B cell (primary cell): ENCODE measurements at regions of chr15 and their contacts with region 1.

Region 1: DNA sequence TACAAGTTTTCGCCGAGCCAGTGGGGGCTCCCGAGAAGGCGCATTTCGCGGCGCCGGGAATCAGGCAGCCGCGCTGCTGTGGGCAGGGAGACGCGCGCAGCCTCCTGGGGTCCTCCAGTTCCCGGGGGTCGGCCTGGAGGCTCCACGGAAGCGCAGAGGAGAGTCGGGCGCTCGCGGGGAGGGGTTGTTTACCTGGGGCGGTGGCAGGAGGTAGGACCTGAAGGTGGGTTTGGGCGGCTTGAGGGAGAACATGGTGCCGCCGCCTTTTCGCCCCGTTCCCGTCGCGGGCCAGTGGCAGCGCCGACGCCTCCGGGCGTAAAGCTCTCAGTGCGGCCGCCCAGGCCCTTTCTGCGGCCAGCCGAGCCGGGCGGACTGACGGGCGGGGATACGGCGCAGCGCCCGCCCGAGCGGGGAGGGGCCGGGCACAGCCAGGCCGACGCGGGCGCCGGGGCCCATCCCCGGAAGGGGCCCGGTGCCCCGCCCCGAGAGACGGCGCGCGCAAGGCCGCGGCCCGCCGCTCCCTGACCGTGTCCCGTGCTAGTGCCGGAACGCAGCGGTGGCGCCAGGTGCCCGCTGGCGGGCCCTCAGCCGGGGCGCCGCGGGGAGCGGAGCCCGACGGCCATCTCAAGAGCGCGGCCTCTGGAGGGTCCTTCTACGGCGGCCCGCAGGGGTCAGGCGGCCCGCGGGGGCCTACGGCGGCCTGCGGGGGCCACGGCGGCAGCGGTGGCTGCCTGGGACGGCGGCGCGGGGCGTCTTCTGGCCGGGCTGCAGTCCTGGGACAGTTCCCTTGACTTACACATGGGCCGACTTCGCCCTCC is at the start of gene MTMR10:
- DNase-seq: peak; percentile 90
- ATAC-seq: peak; percentile 92
- H3K4me3 ChIP-seq: peak within 1 kb of the TSS; percentile 77 to 96 (median 85)
- H3K4me3 Mint-ChIP-seq: peak within 1 kb of the TSS; percentile 95
- H3K27ac ChIP-seq: peak within 1 kb of the TSS; percentile 81 to 94
- H3K27ac Mint-ChIP-seq: peak within 1 kb of the TSS; percentile 97
- H3K4me1 ChIP-seq: peaks cover 21 to 31% of the 10 kb centered on the region in 2 donors
- H3K4me1 Mint-ChIP-seq: peaks cover 31% of the 10 kb centered on the region
- H3K27me3 ChIP-seq: no peaks in the 10 kb centered on the region
- H3K27me3 Mint-ChIP-seq: no peaks in the 10 kb centered on the region
- CTCF ChIP-seq: no peak
- total RNA-seq, gene MTMR10: 50.2 and 53.2 TPM in 2 replicates

Region 2: DNA sequence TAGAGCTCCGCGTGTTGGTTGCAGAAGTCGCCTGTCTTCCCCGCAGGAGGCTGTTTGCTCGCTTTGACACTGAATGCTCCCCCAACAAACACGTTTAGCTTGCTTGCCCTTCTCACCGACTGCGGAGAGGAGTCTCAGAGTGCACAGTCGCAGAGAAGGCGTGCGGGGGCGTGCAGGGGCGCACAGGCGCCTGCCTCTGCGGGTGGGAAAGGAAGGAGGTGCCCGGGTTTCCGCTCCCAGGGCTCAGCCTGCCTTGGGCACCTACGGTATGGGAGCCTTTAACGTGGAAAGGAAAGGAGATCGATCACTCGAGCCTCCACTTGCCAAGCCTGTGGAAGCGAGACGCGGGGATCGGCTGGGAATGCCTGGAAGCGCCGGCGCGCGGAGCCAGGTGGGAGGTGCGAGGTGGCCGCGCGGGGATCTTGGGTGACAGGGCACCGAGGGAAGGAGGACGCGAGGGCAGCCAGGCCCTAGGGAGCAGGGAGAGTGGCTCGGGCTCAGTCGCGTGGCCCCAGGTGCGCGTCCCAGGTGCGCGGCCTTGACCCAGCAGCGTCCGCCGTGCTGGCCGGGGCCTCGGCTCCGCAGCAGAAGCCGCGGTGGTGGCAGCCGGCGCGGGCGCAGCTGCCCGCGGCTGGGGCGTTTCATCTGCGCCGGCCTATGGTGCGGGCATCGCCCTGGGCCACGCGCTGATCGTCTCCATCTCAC is 87.8 kb before region 1 on chr15 and contains the start of gene FAN1:
- CTCF ChIA-PET with region 1: no interaction called
- POLR2A ChIA-PET with region 1: no interaction called
- intact Hi-C with region 1: loop called (anchors 2 kb)
- DNase-seq: peak; percentile 79
- ATAC-seq: peak; percentile 93
- H3K4me3 ChIP-seq: peak within 1 kb of the TSS; percentile 62 to 84 (median 71)
- H3K4me3 Mint-ChIP-seq: peak within 1 kb of the TSS; percentile 93
- H3K27ac ChIP-seq: peak within 1 kb of the TSS in 1 of 2 donors; percentile 56
- H3K27ac Mint-ChIP-seq: peak within 1 kb of the TSS; percentile 83
- H3K4me1 ChIP-seq: peaks cover 0 to 6% of the 10 kb centered on the region in 2 donors
- H3K4me1 Mint-ChIP-seq: peaks cover 29% of the 10 kb centered on the region
- H3K27me3 ChIP-seq: no peaks in the 10 kb centered on the region
- H3K27me3 Mint-ChIP-seq: no peaks in the 10 kb centered on the region
- CTCF ChIP-seq: no peak
- total RNA-seq, gene FAN1: 20.5 and 21.3 TPM in 2 replicates

Region 3: GRCh38 chr15:30973379-30973778 is 18.1 kb before region 1 on chr15:
- CTCF ChIA-PET with region 1: interaction called, 5 read pairs
- POLR2A ChIA-PET with region 1: no interaction called
- intact Hi-C with region 1: loop called (anchors 2 kb)
- DNase-seq: no peak
- ATAC-seq: no peak
- H3K4me3 ChIP-seq: no peak overlapping the region
- H3K4me3 Mint-ChIP-seq: no peak overlapping the region
- H3K27ac ChIP-seq: no peak overlapping the region
- H3K27ac Mint-ChIP-seq: no peak overlapping the region
- H3K4me1 ChIP-seq: peaks cover 17 to 33% of the 10 kb centered on the region in 2 donors
- H3K4me1 Mint-ChIP-seq: peaks cover 64% of the 10 kb centered on the region
- H3K27me3 ChIP-seq: no peaks in the 10 kb centered on the region
- H3K27me3 Mint-ChIP-seq: no peaks in the 10 kb centered on the region
- CTCF ChIP-seq: no peak

Region 4: GRCh38 chr15:31004220-31004733 is 12.8 kb after region 1 on chr15:
- CTCF ChIA-PET with region 1: interaction called, 10 read pairs
- POLR2A ChIA-PET with region 1: interaction called, 15 read pairs
- intact Hi-C with region 1: loop called (anchors 2 kb)
- DNase-seq: peak; percentile 83
- ATAC-seq: peak; percentile 92
- H3K4me3 ChIP-seq: peak overlapping the region in 4 of 5 experiments; percentile 3 to 47 (median 30)
- H3K4me3 Mint-ChIP-seq: peak overlapping the region; percentile 75
- H3K27ac ChIP-seq: peak overlapping the region; percentile 28 to 55
- H3K27ac Mint-ChIP-seq: peak overlapping the region; percentile 90
- H3K4me1 ChIP-seq: peaks cover 46 to 61% of the 10 kb centered on the region in 2 donors
- H3K4me1 Mint-ChIP-seq: peaks cover 84% of the 10 kb centered on the region
- H3K27me3 ChIP-seq: no peaks in the 10 kb centered on the region
- H3K27me3 Mint-ChIP-seq: no peaks in the 10 kb centered on the region
- CTCF ChIP-seq: no peak

Region 5: DNA sequence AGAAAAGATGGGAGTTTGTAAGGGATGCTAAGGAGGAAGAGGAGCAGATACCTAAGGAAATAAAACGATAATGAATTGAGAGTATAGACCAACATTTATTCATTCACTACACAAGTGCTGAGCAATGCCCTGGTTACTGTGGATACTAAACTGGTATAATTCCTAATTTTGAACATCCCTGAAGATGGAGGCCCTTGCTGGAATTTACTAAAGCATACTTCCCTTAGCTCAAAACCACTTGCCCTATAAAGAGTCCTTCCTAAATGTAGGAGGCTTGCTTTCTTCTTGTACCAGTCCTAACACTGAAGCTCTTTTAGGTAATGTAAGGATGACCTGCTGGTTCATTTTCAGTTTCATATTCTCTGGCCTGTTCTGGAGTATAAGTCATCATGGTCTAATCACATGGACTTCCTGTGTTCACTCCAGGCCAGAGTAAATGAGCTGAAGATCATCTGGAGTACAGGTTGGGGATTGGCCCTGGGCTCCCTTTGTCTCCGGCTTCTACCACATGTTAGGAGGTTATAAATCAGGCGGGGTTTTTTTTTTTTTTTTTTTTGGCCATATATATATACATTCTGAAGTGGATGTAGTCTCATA is 40.1 kb after region 1 on chr15:
- CTCF ChIA-PET with region 1: no interaction called
- POLR2A ChIA-PET with region 1: interaction called, 3 read pairs
- intact Hi-C with region 1: loop called (anchors 5 kb)
- DNase-seq: no peak
- ATAC-seq: peak; percentile 45
- H3K4me3 ChIP-seq: no peak overlapping the region
- H3K4me3 Mint-ChIP-seq: no peak overlapping the region
- H3K27ac ChIP-seq: no peak overlapping the region
- H3K27ac Mint-ChIP-seq: no peak overlapping the region
- H3K4me1 ChIP-seq: peaks cover 21% of the 10 kb centered on the region in 2 donors
- H3K4me1 Mint-ChIP-seq: peaks cover 45% of the 10 kb centered on the region
- H3K27me3 ChIP-seq: no peaks in the 10 kb centered on the region
- H3K27me3 Mint-ChIP-seq: no peaks in the 10 kb centered on the region
- CTCF ChIP-seq: no peak

Region 6: DNA sequence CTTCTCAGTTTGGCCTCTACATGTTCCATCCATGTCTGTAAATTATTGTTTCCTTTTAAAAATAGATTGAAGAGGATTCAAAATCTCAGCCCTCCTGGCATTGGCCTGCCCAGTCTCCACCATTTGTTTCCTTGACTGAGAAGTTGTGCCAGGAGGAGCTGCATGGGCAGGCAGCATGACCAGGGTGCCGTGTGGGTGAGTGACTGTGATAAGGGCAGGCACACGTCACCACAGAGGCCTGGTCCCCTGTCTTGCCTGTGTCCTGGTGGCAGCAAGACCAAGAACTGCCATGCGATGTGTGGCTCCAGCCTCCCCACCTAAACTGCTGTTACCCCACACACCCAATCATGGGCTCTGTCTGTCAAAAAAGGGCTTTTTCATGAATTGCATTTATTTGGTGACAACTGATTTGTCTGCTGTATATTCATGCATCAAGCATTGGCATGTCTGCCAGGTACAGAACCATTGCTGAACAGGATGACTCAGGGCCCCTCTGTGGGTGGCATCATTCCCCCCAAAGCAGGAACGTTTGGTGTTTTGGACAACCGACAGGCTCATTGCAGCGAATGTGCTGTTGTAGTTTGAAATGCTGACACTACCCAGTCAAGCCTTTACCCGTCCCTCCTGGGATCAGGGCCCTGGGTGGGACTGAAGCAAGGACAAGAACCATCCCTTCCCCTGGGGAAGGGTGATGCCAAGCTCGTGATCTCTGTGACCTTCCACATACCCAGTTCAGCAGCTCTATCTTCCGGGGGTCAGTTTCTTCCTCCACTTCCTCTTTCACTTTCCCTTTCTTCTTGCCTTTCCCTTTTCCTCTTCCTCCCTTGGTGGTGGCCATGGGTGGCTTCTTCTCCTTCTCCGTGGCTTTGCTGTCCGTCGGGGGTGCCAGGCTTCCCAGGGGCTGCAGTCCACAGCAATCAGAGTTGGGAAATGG is 58.5 kb after region 1 on chr15:
- CTCF ChIA-PET with region 1: no interaction called
- POLR2A ChIA-PET with region 1: no interaction called
- intact Hi-C with region 1: loop called (anchors 2 kb)
- DNase-seq: peak; percentile 56
- ATAC-seq: peak; percentile 59
- H3K4me3 ChIP-seq: peak overlapping the region in 1 of 5 experiments; percentile 32
- H3K4me3 Mint-ChIP-seq: peak overlapping the region; percentile 69
- H3K27ac ChIP-seq: peak overlapping the region; percentile 74 to 87
- H3K27ac Mint-ChIP-seq: peak overlapping the region; percentile 95
- H3K4me1 ChIP-seq: peaks cover 49 to 55% of the 10 kb centered on the region in 2 donors
- H3K4me1 Mint-ChIP-seq: peaks cover 62% of the 10 kb centered on the region
- H3K27me3 ChIP-seq: no peaks in the 10 kb centered on the region
- H3K27me3 Mint-ChIP-seq: no peaks in the 10 kb centered on the region
- CTCF ChIP-seq: no peak

Region 7: DNA sequence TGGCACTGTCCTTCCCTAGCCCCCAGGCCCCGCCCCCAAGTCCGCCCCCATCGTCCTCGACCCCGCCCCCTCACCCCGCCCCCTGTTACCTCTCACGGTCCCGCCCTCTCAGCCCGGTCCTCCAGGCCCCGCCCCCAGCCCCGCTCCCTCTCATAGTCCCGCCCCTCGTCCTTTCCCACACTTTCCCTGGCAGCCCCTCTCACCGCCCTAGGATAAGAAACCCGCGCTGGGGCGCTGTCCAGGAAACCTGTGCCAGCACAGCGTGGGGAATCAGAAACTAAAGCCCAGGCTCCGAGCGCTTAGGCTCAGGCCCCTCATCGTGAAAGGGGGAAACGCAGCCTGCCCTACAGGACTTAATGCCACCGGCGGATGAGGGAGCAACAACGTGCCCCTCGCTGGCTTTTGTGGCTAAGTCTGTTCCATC is 89.1 kb after region 1 on chr15:
- CTCF ChIA-PET with region 1: interaction called, 3 read pairs
- POLR2A ChIA-PET with region 1: no interaction called
- intact Hi-C with region 1: loop called (anchors 1 kb)
- DNase-seq: peak; percentile 59
- ATAC-seq: peak; percentile 90
- H3K4me3 ChIP-seq: peak overlapping the region in 4 of 5 experiments; percentile 38 to 68 (median 64)
- H3K4me3 Mint-ChIP-seq: peak overlapping the region; percentile 80
- H3K27ac ChIP-seq: no peak overlapping the region
- H3K27ac Mint-ChIP-seq: no peak overlapping the region
- H3K4me1 ChIP-seq: peaks cover 30 to 40% of the 10 kb centered on the region in 2 donors
- H3K4me1 Mint-ChIP-seq: peaks cover 52% of the 10 kb centered on the region
- H3K27me3 ChIP-seq: peaks cover 0 to 3% (median 0%) of the 10 kb centered on the region in 4 experiments
- H3K27me3 Mint-ChIP-seq: peaks cover 5% of the 10 kb centered on the region
- CTCF ChIP-seq: no peak

Region 8: GRCh38 chr15:31111091-31111647 is 119.7 kb after region 1 on chr15:
- CTCF ChIA-PET with region 1: no interaction called
- POLR2A ChIA-PET with region 1: no interaction called
- intact Hi-C with region 1: no loop called
- DNase-seq: no peak
- ATAC-seq: no peak
- H3K4me3 ChIP-seq: no peak overlapping the region
- H3K4me3 Mint-ChIP-seq: no peak overlapping the region
- H3K27ac ChIP-seq: no peak overlapping the region
- H3K27ac Mint-ChIP-seq: no peak overlapping the region
- H3K4me1 ChIP-seq: no peaks in the 10 kb centered on the region
- H3K4me1 Mint-ChIP-seq: no peaks in the 10 kb centered on the region
- H3K27me3 ChIP-seq: no peaks in the 10 kb centered on the region
- H3K27me3 Mint-ChIP-seq: peaks cover 6% of the 10 kb centered on the region
- CTCF ChIP-seq: no peak